Right cardiac atrium (tissue), 5 donors: ENCODE measurements at regions of chr3 and their contacts with region 1.

Region 1: DNA sequence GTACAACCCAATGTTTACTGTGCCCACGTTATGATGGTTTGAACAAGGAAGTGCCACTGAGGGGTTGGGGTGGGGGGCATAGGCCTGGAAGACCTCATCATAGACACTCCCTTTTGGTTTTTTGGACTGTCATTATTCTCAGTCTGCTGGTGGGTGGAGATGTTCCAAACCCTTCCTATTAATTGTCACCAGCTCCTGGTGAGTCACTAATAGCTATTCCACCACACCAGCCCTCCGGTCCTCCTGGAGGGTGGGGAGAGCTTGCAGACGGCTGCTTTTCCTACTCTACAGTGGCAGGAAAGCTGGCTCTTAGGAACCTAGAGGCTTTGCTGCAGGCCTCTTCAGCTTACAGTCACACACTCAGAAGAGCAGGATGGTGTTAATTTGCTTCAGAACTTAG is 9.0 kb upstream of the COPG1 start:
- DNase-seq: no peak
- ATAC-seq: peak in 1 of 2 donors; percentile 66
- H3K4me3 ChIP-seq: no peak overlapping the region
- H3K27ac ChIP-seq: no peak overlapping the region
- H3K4me1 ChIP-seq: peaks cover 4% of the 10 kb centered on the region
- H3K27me3 ChIP-seq: no peaks in the 10 kb centered on the region

Region 2: GRCh38 chr3:129003578-129004160 is 236.8 kb before region 1 on chr3:
- intact Hi-C with region 1: no loop called
- DNase-seq: peak in 2 of 3 donors; percentile 62 to 65
- ATAC-seq: peak in 1 of 2 donors; percentile 7
- H3K4me3 ChIP-seq: no peak overlapping the region
- H3K27ac ChIP-seq: no peak overlapping the region
- H3K4me1 ChIP-seq: no peaks in the 10 kb centered on the region
- H3K27me3 ChIP-seq: no peaks in the 10 kb centered on the region

Region 3: DNA sequence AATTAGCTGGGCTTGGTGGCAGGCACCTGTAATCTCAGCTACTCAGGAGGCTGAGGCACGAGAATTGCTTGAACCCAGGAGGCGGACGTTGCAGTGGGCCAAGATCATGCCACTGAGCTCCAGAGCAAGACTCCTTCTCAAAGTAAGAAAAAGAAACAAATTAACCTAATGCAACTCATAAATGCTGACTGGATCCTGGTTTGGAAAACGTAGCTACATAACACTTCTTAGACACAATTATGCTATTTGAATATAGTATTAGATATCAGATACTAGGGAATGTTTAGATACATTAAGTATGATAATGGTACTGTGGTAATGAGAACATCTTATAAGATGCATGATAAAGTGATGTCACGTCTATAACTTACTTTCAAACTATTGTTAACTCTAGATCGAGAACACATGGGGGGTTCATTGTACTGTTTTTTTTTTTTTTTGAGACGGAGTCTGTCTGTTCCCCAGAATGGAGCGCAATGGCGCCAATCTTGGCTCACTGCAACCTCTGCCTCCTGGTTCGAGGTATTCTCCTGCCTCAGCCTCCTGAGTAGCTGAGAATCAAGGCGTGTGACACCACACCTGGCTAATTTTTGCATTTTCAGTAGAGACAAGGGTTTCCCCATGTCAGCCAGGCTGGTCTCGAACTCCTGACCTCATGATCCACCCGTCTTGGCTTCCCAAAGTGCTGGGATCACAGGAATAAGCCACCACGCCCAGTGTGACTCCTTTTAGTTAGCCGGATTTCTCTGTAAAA is 73.7 kb before region 1 on chr3:
- intact Hi-C with region 1: loop called in 2 of 4 experiments (anchors 5 kb)
- DNase-seq: no peak
- ATAC-seq: no peak
- H3K4me3 ChIP-seq: no peak overlapping the region
- H3K27ac ChIP-seq: no peak overlapping the region
- H3K4me1 ChIP-seq: peaks cover 5% of the 10 kb centered on the region
- H3K27me3 ChIP-seq: no peaks in the 10 kb centered on the region

Region 4: GRCh38 chr3:130328591-130328990 is 1088.2 kb after region 1 on chr3:
- intact Hi-C with region 1: no loop called
- DNase-seq: no peak
- ATAC-seq: no peak
- H3K4me3 ChIP-seq: no peak overlapping the region
- H3K27ac ChIP-seq: no peak overlapping the region
- H3K4me1 ChIP-seq: no peaks in the 10 kb centered on the region
- H3K27me3 ChIP-seq: no peaks in the 10 kb centered on the region